ENCODE measurements at regions of chr15 and their contacts with region 1.

Region 1: GRCh38 chr15:42207674-42208579 is at the start of gene VPS39:
- DNase-seq: peak; percentile 90
- H3K4me3 ChIP-seq: peak within 1 kb of the TSS; percentile 68 to 87 (median 82)
- H3K27ac ChIP-seq: peak within 1 kb of the TSS; percentile 79 to 87 (median 82)
- H3K4me1 ChIP-seq: peaks cover 0 to 24% (median 19%) of the 10 kb centered on the region in 4 donors
- H3K27me3 ChIP-seq: no peaks in the 10 kb centered on the region
- CTCF ChIP-seq: no peak
- EP300 ChIP-seq: no peak
- POLR2A ChIP-seq: peak in 1 of 2 donors; percentile 50
- total RNA-seq, gene VPS39: 70.3 to 186 (median 78.6) TPM

Region 2: GRCh38 chr15:42273102-42273899 is 65.4 kb after region 1 on chr15 and contains the starts of genes GANC and TMEM87A:
- intact Hi-C with region 1: loop called (anchors 5 kb)
- DNase-seq: peak; percentile 99
- H3K4me3 ChIP-seq: peak within 1 kb of the TSS; percentile 63 to 79 (median 77)
- H3K27ac ChIP-seq: peak within 1 kb of the TSS; percentile 94 to 98 (median 96)
- H3K4me1 ChIP-seq: peaks cover 4 to 61% (median 47%) of the 10 kb centered on the region in 4 donors
- H3K27me3 ChIP-seq: no peaks in the 10 kb centered on the region
- CTCF ChIP-seq: no peak
- EP300 ChIP-seq: peak in 2 of 4 donors; percentile 17 to 48
- POLR2A ChIP-seq: peak; percentile 88 to 91
- total RNA-seq, gene GANC: 18.9 to 34.1 (median 22.9) TPM
- total RNA-seq, gene TMEM87A: 32.7 to 45.3 (median 42.6) TPM

Measured in sigmoid colon (tissue), 7 donors.